ENCODE measurements at regions of chr1 and their contacts with region 1.

Region 1: GRCh38 chr1:19894218-19894617 is 12.0 kb downstream of the OTUD3 start:
- H3K4me3 ChIP-seq: no peak overlapping the region
- H3K27ac ChIP-seq: no peak overlapping the region
- H3K4me1 ChIP-seq: 0 out of 2 replicates have a peak, but pooled peaks cover 3% of the 10 kb centered on the region
- CTCF ChIP-seq: no peak

Region 2: DNA sequence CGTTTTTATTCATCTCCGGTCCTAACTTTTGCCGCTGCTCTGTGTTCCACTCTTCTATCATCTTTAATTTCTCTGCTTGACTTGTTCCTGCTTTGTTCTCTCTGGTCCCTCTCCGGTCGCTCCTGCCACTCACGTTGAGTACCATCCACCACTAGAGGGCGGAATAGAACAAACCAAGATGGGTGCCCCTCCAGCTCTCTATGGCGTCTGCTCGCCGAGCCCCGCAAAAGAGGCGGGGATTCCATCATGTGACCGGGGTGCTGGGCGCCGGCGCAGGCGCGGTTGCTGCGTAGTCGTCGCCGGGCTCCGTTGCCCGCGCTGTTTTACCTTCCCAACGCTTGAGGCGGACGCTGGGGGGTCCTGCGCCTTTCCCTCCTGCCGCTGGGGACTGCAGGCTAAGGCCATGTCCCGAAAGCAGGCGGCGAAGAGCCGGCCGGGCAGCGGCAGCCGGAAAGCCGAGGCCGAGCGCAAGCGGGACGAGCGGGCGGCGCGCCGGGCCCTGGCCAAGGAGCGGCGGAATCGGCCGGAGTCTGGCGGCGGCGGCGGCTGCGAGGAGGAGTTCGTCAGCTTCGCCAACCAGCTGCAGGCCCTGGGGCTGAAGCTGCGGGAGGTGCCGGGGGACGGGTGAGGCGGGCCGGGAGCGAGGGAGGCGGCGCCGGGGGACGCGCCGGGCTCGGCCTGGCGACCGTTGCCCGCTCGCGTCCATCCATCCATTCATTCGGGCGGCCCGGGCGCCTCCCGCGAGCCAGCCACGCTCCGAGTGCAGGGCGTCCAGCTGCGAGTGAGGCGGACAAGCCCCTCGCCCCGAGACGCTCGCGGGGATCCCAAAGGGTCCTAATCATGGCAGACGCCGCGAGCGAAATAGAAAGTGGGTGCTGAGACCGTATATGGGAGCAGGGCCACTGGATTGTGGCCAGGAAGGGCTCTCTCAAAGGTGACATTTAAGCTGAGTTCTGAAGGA is 11.8 kb before region 1 on chr1 and contains the start of gene OTUD3:
- CTCF ChIA-PET with region 1: interaction called, 5 read pairs
- POLR2A ChIA-PET with region 1: interaction called, 10 read pairs
- H3K4me3 ChIP-seq: peak within 1 kb of the TSS; percentile 76
- H3K27ac ChIP-seq: peak within 1 kb of the TSS; percentile 75
- H3K4me1 ChIP-seq: no peaks in the 10 kb centered on the region
- CTCF ChIP-seq: peak; percentile 98

Region 3: DNA sequence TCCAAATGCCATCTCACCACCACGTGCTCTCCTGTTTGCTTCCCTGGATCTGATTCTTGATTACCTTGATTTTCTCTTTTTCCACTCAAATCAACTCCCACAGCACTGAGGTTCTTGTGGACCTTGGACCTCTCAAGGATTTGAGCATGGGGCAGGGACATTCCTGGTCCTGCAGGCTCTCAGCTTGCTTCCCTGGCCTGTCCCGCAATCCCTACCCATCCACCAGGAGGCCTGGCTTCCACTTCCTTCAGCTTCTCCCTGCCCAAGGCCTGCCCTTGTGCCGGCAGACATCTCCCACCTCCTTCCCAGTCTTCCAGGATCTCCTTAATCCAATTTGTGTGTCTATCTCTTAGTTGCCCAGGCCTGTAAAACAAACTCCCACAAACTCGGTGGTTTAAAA is 63.6 kb after region 1 on chr1:
- CTCF ChIA-PET with region 1: no interaction called
- POLR2A ChIA-PET with region 1: no interaction called
- H3K4me3 ChIP-seq: no peak overlapping the region
- H3K27ac ChIP-seq: no peak overlapping the region
- H3K4me1 ChIP-seq: no peaks in the 10 kb centered on the region
- CTCF ChIP-seq: no peak

Measured in HEK293 (cell line).